Panc1 (cell line): ENCODE measurements at regions of chr12 and their contacts with region 1.

Region 1: GRCh38 chr12:122399592-122400373 is 22.7 kb downstream of the CLIP1 start:
- DNase-seq: peak; percentile 80
- ATAC-seq: peak; percentile 87
- H3K4me3 ChIP-seq: peak overlapping the region; percentile 36 to 45
- H3K27ac ChIP-seq: peak overlapping the region; percentile 99
- H3K4me1 ChIP-seq: peaks cover 66% of the 10 kb centered on the region
- H3K27me3 ChIP-seq: no peaks in the 10 kb centered on the region
- CTCF ChIP-seq: peak; percentile 83

Region 2: GRCh38 chr12:122427412-122427811 is 27.6 kb after region 1 on chr12:
- CTCF ChIA-PET with region 1: interaction called, 5 read pairs
- POLR2A ChIA-PET with region 1: interaction called, 10 read pairs
- in situ Hi-C with region 1: no loop called
- intact Hi-C with region 1: no loop called
- DNase-seq: no peak
- ATAC-seq: no peak
- H3K4me3 ChIP-seq: no peak overlapping the region
- H3K27ac ChIP-seq: no peak overlapping the region
- H3K4me1 ChIP-seq: peaks cover 13% of the 10 kb centered on the region
- H3K27me3 ChIP-seq: no peaks in the 10 kb centered on the region
- CTCF ChIP-seq: no peak

Region 3: GRCh38 chr12:122471324-122472226 is 71.8 kb after region 1 on chr12:
- CTCF ChIA-PET with region 1: interaction called, 19 read pairs
- POLR2A ChIA-PET with region 1: no interaction called
- in situ Hi-C with region 1: no loop called
- intact Hi-C with region 1: loop called (anchors 1 kb)
- DNase-seq: no peak
- ATAC-seq: peak; percentile 71
- H3K4me3 ChIP-seq: no peak overlapping the region
- H3K27ac ChIP-seq: peak overlapping the region; percentile 60; the same call in 1 of the 2 replicates
- H3K4me1 ChIP-seq: peaks cover 6% of the 10 kb centered on the region; the same call in 1 of the 2 replicates
- H3K27me3 ChIP-seq: no peaks in the 10 kb centered on the region
- CTCF ChIP-seq: peak; percentile 80; the same call in 1 of the 2 replicates

Region 4: DNA sequence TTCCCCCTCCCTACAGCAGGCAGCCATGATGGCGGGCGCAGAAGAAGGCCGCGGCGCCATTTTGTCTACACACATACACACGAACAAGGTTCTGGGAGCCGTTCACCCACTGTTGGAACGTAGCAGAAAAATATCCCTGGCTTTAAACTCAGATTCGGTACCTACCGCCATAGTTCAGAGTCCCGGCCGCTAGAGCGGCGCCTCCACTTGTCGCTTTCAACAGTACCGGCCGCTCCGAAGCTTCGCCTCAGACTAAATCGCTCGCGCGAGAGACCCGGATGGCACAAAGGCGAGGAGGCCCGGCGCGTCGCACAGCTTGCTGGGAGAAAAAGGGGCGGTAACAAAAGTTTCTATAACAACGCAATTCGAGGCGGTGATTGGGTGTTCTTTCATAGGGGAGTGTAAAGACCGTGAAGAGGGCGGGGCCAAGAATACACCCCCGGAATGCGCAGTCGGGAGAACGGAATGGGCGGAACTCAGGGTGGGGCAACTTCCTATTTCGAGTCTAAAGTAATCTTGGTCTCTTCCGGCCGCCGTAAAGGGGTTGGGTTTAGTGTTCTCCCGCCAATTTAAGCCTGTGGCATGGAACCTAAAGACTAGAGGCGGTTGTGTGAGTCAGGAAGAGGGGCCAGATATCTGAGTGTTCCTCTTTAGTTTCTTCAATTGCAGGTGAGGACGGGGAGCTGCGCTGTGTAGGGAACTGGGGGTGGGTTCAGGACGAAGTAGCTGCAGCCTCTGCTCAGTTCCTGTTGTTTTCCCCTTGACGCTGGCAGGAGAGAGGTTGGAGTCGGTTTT is 127.1 kb after region 1 on chr12 and contains the starts of genes KNTC1 and RSRC2:
- CTCF ChIA-PET with region 1: no interaction called
- POLR2A ChIA-PET with region 1: interaction called, 12 read pairs
- in situ Hi-C with region 1: no loop called
- intact Hi-C with region 1: no loop called
- DNase-seq: peak; percentile 96
- ATAC-seq: peak; percentile 94
- H3K4me3 ChIP-seq: peak within 1 kb of the TSS; percentile 93 to 100
- H3K27ac ChIP-seq: peak within 1 kb of the TSS; percentile 100
- H3K4me1 ChIP-seq: peaks cover 19% of the 10 kb centered on the region
- H3K27me3 ChIP-seq: no peaks in the 10 kb centered on the region
- CTCF ChIP-seq: no peak
- total RNA-seq, gene KNTC1: 53.9 TPM
- total RNA-seq, gene RSRC2: 57.8 TPM